Pancreas (tissue), 10 donors: ENCODE measurements at regions of chr9 and their contacts with region 1.

Region 1: GRCh38 chr9:105610381-105610780 is 51.9 kb upstream of the TAL2 start:
- DNase-seq: no peak
- ATAC-seq: no peak
- H3K4me3 ChIP-seq: no peak overlapping the region
- H3K27ac ChIP-seq: no peak overlapping the region
- H3K4me1 ChIP-seq: no peaks in the 10 kb centered on the region
- H3K27me3 ChIP-seq: no peaks in the 10 kb centered on the region
- CTCF ChIP-seq: no peak

Region 2: DNA sequence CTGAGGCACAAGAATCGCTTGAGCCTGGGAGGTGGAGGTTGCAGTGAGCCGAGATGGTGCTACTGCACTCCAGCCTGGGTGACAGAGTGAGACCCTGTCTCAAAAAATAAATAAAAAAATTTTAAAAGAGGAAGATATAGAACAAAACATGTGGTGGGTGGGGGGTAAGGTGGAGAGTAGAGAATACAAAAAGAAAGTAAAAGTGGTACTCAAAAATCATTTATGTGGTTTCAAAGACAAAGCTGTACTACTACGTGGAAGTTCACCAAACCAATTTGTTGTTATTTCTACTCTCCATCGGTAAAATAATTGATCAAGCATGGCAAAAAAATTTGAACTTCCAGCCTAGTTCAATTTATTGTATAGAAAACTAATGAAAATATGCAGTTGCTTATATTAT is 1065.7 kb before region 1 on chr9:
- intact Hi-C with region 1: no loop called
- DNase-seq: no peak
- ATAC-seq: no peak
- H3K4me3 ChIP-seq: no peak overlapping the region
- H3K27ac ChIP-seq: no peak overlapping the region
- H3K4me1 ChIP-seq: no peaks in the 10 kb centered on the region
- H3K27me3 ChIP-seq: no peaks in the 10 kb centered on the region
- CTCF ChIP-seq: no peak

Region 3: DNA sequence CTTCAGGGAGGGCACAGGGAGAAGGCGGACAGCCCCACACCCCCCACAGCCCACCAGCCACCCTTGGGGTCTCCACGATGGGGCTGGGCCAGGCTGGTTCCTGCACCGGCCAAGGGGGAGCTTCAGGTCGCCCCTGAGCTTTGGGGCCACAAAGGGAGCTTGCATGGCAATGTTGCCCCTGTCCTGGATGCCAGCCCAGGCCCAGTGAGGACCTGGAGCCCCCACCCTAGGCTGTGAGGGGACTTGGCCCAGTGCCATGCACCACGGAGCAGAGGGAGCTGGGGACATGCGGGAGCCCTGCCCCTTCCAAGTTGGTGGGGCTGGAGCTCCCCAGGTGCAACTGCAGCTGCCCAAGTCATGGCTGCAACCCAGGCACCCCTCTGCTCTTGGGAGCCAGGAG is 102.4 kb after region 1 on chr9:
- intact Hi-C with region 1: loop called in 2 of 3 experiments (anchors 10 kb)
- DNase-seq: peak in 2 of 6 donors; percentile 47 to 75
- ATAC-seq: no peak
- H3K4me3 ChIP-seq: no peak overlapping the region
- H3K27ac ChIP-seq: no peak overlapping the region
- H3K4me1 ChIP-seq: no peaks in the 10 kb centered on the region
- H3K27me3 ChIP-seq: no peaks in the 10 kb centered on the region
- CTCF ChIP-seq: no peak